Vagina (tissue), 2 donors: ENCODE measurements at regions of chr1 and their contacts with region 1.

Region 1: DNA sequence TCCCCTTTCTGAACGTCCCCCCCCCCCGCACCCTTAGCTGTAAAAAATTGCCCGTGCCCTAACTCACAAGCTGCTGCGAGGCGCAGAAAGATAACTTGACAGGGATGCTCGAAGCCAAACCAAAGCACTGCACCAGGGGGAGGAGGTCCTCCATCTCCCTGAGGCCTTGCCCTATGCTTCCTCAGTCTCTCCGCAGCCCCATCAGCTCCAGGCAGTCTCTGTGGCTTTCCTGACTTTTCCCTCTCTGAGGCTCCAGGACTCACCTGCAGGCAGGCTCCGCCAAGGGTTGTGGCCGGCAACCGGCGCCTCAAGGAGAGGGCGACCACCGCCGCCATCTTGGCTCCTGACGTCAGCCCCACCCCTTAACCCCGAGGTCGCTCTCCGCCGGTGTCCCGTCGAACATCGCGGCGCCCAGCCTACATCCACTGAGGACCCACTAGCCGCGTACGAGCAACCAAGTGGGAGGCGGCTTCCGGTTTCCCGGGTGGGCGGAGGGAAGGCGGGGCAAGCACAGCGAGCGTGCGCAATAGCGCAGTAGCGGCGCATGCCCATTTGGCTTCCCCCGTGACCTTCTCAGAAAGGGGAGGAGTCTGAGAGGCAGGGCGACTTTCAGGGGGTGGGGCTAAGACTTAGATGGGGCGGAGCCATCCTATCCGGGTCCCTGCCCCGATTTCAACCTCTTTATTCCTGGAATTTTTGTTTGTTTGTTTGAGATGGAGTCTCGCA is at the start of gene SDHB:
- DNase-seq: peak; percentile 99
- H3K4me3 ChIP-seq: peak within 1 kb of the TSS; percentile 86 to 89
- H3K27ac ChIP-seq: peak within 1 kb of the TSS; percentile 77
- H3K4me1 ChIP-seq: peaks cover 26% of the 10 kb centered on the region
- H3K27me3 ChIP-seq: no peaks in the 10 kb centered on the region
- CTCF ChIP-seq: no peak
- POLR2A ChIP-seq: peak; percentile 76 to 84
- total RNA-seq, gene SDHB: 96.5 TPM

Region 2: GRCh38 chr1:16958503-16958902 is 95.3 kb before region 1 on chr1:
- intact Hi-C with region 1: loop called (anchors 5 kb)
- DNase-seq: no peak
- H3K4me3 ChIP-seq: no peak overlapping the region
- H3K27ac ChIP-seq: no peak overlapping the region
- H3K4me1 ChIP-seq: no peaks in the 10 kb centered on the region
- H3K27me3 ChIP-seq: no peaks in the 10 kb centered on the region
- CTCF ChIP-seq: no peak
- POLR2A ChIP-seq: no peak

Region 3: DNA sequence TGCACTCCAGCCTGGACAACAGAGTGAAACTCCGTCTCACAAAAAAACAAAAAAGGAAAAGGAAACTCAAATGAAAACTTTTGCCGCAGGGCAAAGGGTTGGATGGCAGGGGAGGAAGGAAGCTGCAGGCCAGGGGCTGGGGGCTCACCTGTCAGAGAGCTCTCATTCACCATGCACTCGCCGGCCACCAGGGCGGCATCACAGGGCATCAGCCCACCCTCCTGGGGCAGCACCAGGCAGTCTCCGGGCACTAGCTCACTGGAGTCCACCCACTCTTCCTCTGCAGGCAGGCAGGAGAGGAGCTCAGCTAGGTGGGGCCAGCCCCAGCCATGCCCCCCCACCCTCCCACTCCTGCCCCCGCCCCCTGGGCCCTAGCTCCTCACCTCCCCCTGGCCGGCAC is 54.0 kb before region 1 on chr1:
- intact Hi-C with region 1: no loop called
- DNase-seq: no peak
- H3K4me3 ChIP-seq: no peak overlapping the region
- H3K27ac ChIP-seq: no peak overlapping the region
- H3K4me1 ChIP-seq: no peaks in the 10 kb centered on the region
- H3K27me3 ChIP-seq: no peaks in the 10 kb centered on the region
- CTCF ChIP-seq: no peak
- POLR2A ChIP-seq: no peak

Region 4: GRCh38 chr1:17125756-17126237 is 71.9 kb after region 1 on chr1:
- intact Hi-C with region 1: no loop called
- DNase-seq: peak in 1 of 2 donors; percentile 96
- H3K4me3 ChIP-seq: no peak overlapping the region
- H3K27ac ChIP-seq: no peak overlapping the region
- H3K4me1 ChIP-seq: peaks cover 7% of the 10 kb centered on the region
- H3K27me3 ChIP-seq: no peaks in the 10 kb centered on the region
- CTCF ChIP-seq: peak; percentile 82 to 89 (median 83)
- POLR2A ChIP-seq: no peak

Region 5: GRCh38 chr1:17330856-17331255 is 277.0 kb after region 1 on chr1:
- intact Hi-C with region 1: no loop called
- DNase-seq: no peak
- H3K4me3 ChIP-seq: no peak overlapping the region
- H3K27ac ChIP-seq: no peak overlapping the region
- H3K4me1 ChIP-seq: no peaks in the 10 kb centered on the region
- H3K27me3 ChIP-seq: no peaks in the 10 kb centered on the region
- CTCF ChIP-seq: no peak
- POLR2A ChIP-seq: no peak